BJ (cell line): ENCODE measurements at regions of chr17 and their contacts with region 1.

Region 1: DNA sequence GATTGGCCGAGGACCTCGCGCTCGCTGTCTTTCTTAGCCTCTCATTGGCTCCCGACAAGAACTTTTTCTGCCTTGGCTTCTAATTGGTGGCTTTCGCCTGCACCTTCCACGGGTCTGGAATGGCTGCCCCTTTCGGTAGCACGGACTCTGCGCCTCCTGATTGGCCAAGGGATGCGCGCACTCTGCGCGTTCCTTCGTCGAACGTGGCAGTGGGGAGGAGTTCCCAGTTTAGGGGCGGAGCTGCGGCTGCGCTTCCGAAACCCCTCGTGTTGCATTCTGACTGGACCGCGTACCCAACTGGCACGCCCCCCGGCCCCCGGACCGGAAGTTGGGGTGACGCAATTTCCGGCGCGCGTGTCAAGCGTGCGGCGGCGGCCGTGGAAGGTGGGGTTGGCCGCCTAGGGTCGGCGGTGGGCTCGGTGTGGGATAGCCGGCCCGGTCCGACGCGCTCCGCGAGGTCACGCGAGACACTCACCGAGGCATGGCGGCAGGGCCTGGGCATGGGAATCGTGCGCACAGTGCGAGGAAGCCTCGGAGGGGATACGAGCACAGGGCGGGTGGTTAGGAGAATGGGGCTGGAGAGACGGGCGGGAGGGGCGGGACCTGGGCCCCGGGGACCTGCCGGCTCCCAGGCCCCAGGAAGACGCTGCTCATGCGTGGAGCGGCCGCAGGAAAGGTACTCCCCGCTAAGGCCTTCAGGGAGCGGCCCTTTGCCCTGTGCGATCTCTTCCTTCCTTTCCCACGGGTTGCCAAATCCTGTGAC is 602 bp upstream of the P4HB start:
- DNase-seq: peak; percentile 100
- H3K4me3 ChIP-seq: peak overlapping the region; percentile 83
- H3K27me3 ChIP-seq: no peaks in the 10 kb centered on the region
- CTCF ChIP-seq: 0 out of 2 replicates have a peak, but pooled peaks have one; percentile 18

Region 2: GRCh38 chr17:81702971-81703746 is 157.8 kb before region 1 on chr17 and contains the start of gene MRPL12:
- CTCF ChIA-PET with region 1: no interaction called
- POLR2A ChIA-PET with region 1: interaction called, 18 read pairs
- DNase-seq: peak; percentile 49
- H3K4me3 ChIP-seq: peak within 1 kb of the TSS; percentile 62
- H3K27me3 ChIP-seq: no peaks in the 10 kb centered on the region
- CTCF ChIP-seq: peak; percentile 25
- polyA plus RNA-seq, gene MRPL12: 56.2 and 63.0 TPM in 2 replicates

Region 3: DNA sequence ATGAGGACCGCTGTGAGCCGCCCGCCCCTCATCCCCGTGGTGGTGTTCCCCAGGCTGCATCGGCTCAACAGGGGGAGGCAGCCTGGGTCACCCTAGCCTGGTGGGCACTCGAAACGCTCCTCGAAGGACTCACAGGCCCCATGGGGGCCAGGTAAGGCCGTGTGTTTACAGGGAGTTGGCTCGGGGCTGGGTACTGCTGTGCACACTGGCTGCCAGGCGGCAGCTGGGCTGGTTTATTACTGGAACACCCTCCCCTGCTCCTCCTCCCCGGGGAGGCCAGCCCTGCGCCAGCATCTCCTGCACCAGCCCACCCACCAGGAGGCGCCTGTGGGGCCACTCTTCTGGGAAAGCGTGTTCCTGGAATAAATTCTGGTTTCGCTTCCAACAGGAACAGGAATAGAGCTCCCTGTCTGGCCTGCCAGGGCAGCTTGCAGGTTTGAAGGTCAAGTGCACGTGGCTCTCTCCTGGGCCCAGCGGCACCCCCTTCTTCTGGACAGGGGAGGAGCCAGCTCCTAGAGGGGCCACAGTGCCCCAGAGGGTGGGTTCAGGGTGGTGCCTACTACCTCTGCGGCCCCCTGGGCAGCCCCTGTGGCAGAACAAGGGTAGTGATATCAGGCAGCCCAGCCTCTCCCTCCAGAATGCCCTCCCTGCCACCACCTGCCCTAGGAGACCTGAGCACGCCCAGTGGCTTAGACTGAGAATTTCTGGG is 39.2 kb before region 1 on chr17:
- CTCF ChIA-PET with region 1: no interaction called
- POLR2A ChIA-PET with region 1: no interaction called
- DNase-seq: no peak
- H3K4me3 ChIP-seq: no peak overlapping the region
- H3K27me3 ChIP-seq: no peaks in the 10 kb centered on the region; the same call in 1 of the 2 replicates
- CTCF ChIP-seq: peak; percentile 69

Region 4: DNA sequence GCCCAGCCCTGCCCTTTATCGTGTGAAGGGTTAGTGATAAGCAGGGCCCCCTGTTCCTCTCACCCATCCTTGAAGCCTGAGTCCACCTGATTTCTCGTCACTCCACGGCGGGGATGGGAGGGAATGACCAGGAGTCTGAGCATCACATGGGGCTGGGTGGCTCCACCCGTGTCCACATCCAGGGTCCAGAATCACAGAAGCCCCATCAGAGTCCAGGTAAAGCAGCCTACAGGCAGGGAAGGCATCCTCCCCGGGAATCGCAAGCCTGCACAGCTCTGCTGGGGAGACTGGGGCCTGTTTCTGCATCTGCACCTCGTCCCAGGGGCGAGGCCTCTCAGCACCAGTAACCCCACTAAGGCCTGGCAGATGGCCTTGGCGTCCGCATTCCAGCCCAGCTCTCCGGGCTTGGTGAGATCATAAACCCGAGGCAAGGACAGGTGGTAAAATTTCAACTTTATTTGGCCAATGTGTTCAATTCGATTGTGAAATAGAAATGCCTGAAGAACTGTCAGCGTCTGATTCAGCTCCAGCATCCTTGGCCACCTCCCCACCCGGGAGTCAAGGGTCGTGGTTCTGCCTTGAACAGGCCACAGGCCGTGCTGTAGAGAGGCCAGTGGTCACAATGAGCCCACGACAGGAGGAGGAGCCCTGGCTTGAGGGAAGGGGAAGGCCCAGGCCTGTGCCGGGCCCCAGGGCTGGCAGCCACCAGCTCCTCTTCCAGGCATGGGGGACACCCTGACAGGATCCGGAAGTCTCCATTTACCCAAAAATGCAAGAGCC is 18.0 kb before region 1 on chr17:
- CTCF ChIA-PET with region 1: interaction called, 3 read pairs
- POLR2A ChIA-PET with region 1: interaction called, 14 read pairs
- DNase-seq: no peak
- H3K4me3 ChIP-seq: no peak overlapping the region
- H3K27me3 ChIP-seq: no peaks in the 10 kb centered on the region
- CTCF ChIP-seq: no peak